ENCODE measurements at regions of chr19 and their contacts with region 1.

Region 1: DNA sequence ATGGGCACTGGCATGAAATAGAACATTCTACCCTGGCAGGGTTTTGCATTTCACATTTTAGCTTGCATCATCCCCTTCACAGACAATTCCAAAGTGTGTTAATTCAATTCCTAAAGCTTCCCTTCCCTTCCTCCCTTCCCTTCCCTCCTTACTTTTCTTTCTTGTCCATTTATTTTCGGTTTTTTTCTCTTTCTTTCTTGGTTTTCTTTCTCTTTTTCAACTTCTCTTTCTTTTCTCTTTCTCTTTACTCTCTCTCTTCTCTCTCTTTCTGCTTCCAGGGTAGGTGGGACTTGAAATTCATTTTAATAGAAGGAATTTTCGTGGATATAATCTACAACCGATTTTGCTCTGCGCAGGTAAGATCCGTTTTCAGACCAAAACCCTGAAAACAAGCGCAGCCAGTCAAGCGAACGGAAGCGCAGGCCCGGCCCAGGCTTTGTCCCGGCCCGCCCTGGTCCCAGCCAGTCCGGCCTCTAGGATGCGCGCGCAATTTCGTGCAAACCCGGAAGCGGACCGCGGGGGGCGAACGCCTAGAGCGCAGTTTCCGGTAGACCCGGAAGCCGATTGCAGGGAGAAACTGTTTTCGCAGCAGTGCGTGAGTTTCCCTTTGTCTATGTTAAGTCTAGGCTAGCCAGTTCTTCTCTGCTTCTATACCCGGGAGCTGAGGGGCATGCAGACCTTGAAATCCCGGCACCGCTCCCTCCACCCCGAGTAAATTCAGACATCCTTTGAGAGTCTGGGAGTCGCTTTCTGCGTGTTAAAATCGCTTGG is at the start of gene ZNF528:
- DNase-seq: peak; percentile 91
- H3K4me3 ChIP-seq: peak within 1 kb of the TSS; percentile 34 to 53 (median 42)
- H3K27ac ChIP-seq: no peak within 1 kb of the TSS
- H3K4me1 ChIP-seq: no peaks in the 10 kb centered on the region
- H3K27me3 ChIP-seq: no peaks in the 10 kb centered on the region
- CTCF ChIP-seq: no peak
- total RNA-seq, gene ZNF528: 16.1 to 28.8 TPM

Region 2: GRCh38 chr19:52296773-52297600 is 100.5 kb before region 1 on chr19 and contains the start of gene ZNF480:
- CTCF ChIA-PET with region 1: no interaction called
- dilution Hi-C with region 1: no loop called
- in situ Hi-C with region 1: no loop called
- intact Hi-C with region 1: loop called (anchors 10 kb)
- DNase-seq: peak; percentile 67
- H3K4me3 ChIP-seq: peak within 1 kb of the TSS; percentile 59 to 90 (median 85)
- H3K27ac ChIP-seq: peak within 1 kb of the TSS; percentile 77
- H3K4me1 ChIP-seq: peaks cover 4% of the 10 kb centered on the region
- H3K27me3 ChIP-seq: no peaks in the 10 kb centered on the region
- CTCF ChIP-seq: peak in 1 of 2 donors; percentile 27
- total RNA-seq, gene ZNF480: 4.2 to 9.8 TPM